HCT116 (cell line): ENCODE measurements at regions of chr16 and their contacts with region 1.

Region 1: DNA sequence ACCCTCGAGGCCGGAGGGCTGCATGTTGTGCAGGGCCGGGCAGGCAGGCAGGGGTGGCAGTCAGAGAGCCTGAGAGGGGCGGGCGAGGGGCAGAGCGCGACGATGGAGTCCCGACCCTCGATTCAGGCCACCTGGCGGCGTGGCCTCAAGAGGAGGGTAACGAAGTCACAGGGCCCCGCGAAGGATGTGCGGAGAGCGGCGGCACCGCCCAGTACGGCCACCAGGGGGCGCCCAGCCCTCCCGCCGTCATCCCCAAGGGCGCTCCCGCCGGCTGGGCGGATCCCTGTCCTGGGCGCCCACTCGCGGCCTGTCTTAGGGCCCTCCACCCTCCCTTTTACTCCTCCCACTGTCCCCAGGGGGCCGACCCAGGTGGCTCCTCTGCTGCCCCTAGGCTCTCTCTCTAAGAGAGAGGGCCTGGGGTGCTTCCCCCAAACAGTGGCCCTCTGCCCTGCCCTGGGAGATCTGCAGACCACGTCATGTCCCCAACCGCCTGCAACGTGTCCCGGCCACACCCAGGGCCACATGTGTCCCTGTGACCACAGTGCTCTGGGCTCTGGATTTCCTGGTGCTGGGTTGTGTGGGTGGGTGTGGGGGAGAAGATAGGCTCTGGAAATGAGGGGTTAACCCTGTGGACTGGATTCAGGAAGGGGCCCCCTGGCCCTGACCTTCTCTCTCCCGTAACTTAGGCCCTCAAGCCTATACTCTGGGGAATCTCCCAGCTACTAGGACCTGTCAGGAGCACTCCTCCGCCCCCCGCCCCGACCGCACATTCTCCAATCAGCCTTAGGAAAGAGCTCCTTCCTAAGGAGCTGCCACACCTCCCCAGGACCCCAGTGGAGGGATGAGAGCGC is 5.9 kb downstream of the DPEP2 start:
- DNase-seq: peak; percentile 63
- ATAC-seq: peak; percentile 97
- H3K4me3 ChIP-seq: peak overlapping the region in 1 of 2 experiments; percentile 39; a peak in 2 of 4 replicates
- H3K27ac ChIP-seq: peak overlapping the region; percentile 48; the same call in 1 of the 2 replicates
- H3K4me1 ChIP-seq: peaks cover 5 to 20% of the 10 kb centered on the region in 2 experiments; a peak in 3 of 4 replicates
- H3K27me3 ChIP-seq: no peaks in the 10 kb centered on the region
- CTCF ChIP-seq: peak; percentile 86 to 96 (median 96)
- POLR2A ChIP-seq: no peak
- RAD21 ChIP-seq: peak; percentile 78

Region 2: DNA sequence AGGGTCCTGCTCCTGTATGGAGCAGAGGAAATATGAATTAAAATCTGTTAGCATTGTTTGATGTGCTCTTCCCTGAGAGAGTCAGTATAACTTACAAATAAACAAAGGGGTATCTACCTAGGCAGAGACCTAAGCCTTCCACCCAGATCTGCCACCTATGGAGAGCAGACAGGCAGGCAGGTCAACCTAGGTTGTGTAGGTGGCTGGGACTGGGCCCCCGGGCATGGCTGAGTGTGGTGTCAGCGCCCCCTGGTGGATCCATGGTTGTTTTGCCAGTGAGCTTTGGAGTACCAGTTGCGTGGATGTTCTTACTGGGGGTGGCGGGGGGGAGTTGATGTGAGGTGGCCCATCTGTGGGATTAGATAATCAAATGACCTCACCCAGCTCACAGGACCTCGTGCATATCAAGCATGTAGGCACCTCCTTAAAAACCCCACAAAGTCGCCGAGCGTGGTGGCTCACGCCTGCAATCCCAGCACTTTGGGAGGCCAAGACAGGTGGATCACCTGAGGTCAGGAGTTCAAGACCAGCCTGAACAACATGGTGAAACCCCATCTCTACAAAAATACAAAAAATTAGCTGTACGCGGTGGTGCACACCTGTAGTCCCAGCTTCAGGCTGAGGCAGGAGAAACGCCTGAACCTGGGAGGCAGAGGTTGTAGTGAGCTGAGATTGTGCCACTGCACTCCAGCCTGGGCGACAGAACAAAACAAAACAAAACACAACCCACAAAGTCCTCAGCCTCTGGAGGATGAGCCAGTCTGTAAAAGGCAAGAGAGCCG is 47.3 kb after region 1 on chr16:
- CTCF ChIA-PET with region 1: interaction called, 3 read pairs
- POLR2A ChIA-PET with region 1: no interaction called
- RAD21 ChIA-PET with region 1: no interaction called
- intact Hi-C with region 1: loop called (anchors 1 kb)
- DNase-seq: peak; percentile 63
- ATAC-seq: peak; percentile 99
- H3K4me3 ChIP-seq: no peak overlapping the region
- H3K27ac ChIP-seq: no peak overlapping the region
- H3K4me1 ChIP-seq: peaks cover 4 to 5% of the 10 kb centered on the region in 2 experiments; a peak in 1 of 4 replicates
- H3K27me3 ChIP-seq: no peaks in the 10 kb centered on the region
- CTCF ChIP-seq: peak; percentile 90 to 96 (median 93)
- POLR2A ChIP-seq: no peak
- RAD21 ChIP-seq: peak; percentile 95

Region 3: DNA sequence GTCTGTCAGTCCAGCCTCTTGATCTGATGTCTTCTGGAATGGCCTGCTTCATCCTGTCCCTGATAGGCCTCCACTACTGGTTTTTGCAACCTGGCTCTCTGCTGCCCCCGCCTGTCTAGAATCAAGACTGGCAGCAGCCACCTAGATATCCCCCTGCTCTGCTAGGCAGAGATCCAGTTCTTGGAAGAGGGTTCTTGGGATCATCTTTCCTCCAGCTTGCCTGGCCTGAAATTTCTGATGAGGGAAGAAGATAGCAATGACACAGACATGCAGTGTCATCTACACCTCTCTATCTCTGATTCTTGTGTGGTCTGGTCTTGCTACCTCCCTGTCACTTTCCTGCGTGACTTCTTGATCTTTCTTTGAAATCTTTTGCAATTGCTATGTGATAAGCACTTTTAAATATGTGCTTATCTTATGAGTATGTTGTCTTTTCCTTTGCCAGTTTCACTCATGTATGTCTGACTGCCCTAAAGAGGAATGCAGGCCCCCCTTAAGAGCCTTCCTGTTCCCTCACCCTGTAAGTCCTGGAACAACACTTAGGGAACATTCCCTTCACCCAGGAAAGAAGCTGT is 71.5 kb after region 1 on chr16:
- CTCF ChIA-PET with region 1: no interaction called
- POLR2A ChIA-PET with region 1: no interaction called
- RAD21 ChIA-PET with region 1: no interaction called
- intact Hi-C with region 1: loop called (anchors 1 kb)
- DNase-seq: peak; percentile 28
- ATAC-seq: peak; percentile 98
- H3K4me3 ChIP-seq: no peak overlapping the region
- H3K27ac ChIP-seq: no peak overlapping the region
- H3K4me1 ChIP-seq: no peaks in the 10 kb centered on the region
- H3K27me3 ChIP-seq: no peaks in the 10 kb centered on the region
- CTCF ChIP-seq: peak; percentile 77 to 93 (median 85)
- POLR2A ChIP-seq: no peak
- RAD21 ChIP-seq: peak; percentile 77